Activated CD4-positive, alpha-beta memory T cell treated with anti-CD3 and anti-CD28 coated beads for 36 hours (primary cell): ENCODE measurements at regions of chr22 and their contacts with region 1.

Region 1: DNA sequence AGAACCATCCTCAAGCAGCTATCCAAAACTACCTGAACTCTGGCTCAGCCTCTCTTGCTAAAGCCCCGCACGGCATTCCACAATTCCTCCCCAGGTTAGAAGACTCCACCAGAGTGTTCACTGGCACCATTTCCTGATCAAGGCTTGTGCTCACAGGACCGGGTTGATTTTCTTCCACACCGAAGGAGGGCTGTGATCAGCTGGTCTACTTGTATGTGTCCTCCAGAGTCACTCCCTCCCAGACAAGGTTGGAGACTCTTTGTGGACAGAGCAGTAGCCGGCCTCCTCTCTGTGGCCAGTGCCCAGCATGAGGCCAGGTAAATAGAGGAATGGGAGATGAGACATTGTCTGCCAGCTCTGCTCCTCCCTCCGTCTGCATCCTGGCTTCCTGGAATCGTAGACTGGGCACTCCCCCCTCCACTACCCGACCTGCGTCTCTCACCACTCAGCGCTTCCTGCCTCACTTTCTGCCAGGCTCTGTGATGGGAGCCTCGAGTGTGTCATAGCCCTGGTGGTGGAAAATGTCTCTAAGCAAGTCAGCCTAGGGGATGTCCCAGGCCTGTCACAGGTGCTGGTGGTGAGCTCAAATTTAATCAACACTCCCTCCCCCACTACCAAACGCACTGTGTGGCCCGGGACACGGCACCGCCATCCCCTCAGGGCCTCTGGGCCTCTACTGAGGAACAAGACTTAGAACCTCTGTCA is 12.5 kb upstream of the TMPRSS6 start:
- DNase-seq: peak; percentile 97
- H3K4me3 Mint-ChIP-seq: peak overlapping the region; percentile 88
- H3K27ac Mint-ChIP-seq: peak overlapping the region; percentile 100
- H3K4me1 Mint-ChIP-seq: peaks cover 81% of the 10 kb centered on the region
- H3K27me3 Mint-ChIP-seq: no peaks in the 10 kb centered on the region

Region 2: GRCh38 chr22:36775964-36776669 is 345.9 kb before region 1 on chr22 and contains the start of gene IFT27:
- CTCF ChIA-PET with region 1: no interaction called
- POLR2A ChIA-PET with region 1: interaction called, 3 read pairs
- intact Hi-C with region 1: loop called (anchors 5 kb)
- DNase-seq: peak; percentile 99
- H3K4me3 Mint-ChIP-seq: peak within 1 kb of the TSS; percentile 84
- H3K27ac Mint-ChIP-seq: peak within 1 kb of the TSS; percentile 90
- H3K4me1 Mint-ChIP-seq: peaks cover 30% of the 10 kb centered on the region
- H3K27me3 Mint-ChIP-seq: no peaks in the 10 kb centered on the region
- total RNA-seq, gene IFT27: 27.9 to 32.1 TPM

Region 3: GRCh38 chr22:37060801-37061610 is 61.0 kb before region 1 on chr22:
- CTCF ChIA-PET with region 1: no interaction called
- POLR2A ChIA-PET with region 1: interaction called, 7 read pairs
- intact Hi-C with region 1: loop called (anchors 2 kb)
- DNase-seq: peak; percentile 91
- H3K4me3 Mint-ChIP-seq: peak overlapping the region; percentile 77
- H3K27ac Mint-ChIP-seq: peak overlapping the region; percentile 83
- H3K4me1 Mint-ChIP-seq: peaks cover 38% of the 10 kb centered on the region
- H3K27me3 Mint-ChIP-seq: no peaks in the 10 kb centered on the region

Region 4: DNA sequence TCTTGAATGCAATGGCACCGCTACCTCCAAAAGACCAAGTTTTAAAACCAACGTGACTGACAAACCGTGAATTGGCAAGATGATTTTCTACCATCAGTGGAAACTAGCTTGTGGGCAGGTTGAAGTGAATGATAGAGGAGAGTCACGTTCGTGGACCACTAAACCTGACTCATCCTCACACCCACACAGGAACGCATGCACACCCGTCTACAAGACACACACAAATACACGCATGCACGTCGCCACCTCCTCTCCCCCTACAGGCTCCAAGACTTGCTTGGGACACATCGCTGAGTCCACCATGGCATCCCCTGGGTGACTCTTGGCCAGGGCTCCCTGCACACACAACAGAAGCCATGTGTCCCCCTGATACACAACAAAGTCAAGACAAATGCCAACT is 26.9 kb before region 1 on chr22:
- CTCF ChIA-PET with region 1: interaction called, 4 read pairs
- POLR2A ChIA-PET with region 1: interaction called, 36 read pairs
- intact Hi-C with region 1: loop called (anchors 2 kb)
- DNase-seq: peak; percentile 85
- H3K4me3 Mint-ChIP-seq: no peak overlapping the region
- H3K27ac Mint-ChIP-seq: peak overlapping the region; percentile 76
- H3K4me1 Mint-ChIP-seq: peaks cover 35% of the 10 kb centered on the region
- H3K27me3 Mint-ChIP-seq: peaks cover 3% of the 10 kb centered on the region

Region 5: GRCh38 chr22:37166675-37167066 is 44.6 kb after region 1 on chr22:
- CTCF ChIA-PET with region 1: interaction called, 26 read pairs
- POLR2A ChIA-PET with region 1: interaction called, 70 read pairs
- intact Hi-C with region 1: loop called (anchors 1 kb)
- DNase-seq: peak; percentile 92
- H3K4me3 Mint-ChIP-seq: peak overlapping the region; percentile 68
- H3K27ac Mint-ChIP-seq: peak overlapping the region; percentile 67
- H3K4me1 Mint-ChIP-seq: peaks cover 79% of the 10 kb centered on the region
- H3K27me3 Mint-ChIP-seq: no peaks in the 10 kb centered on the region

Region 6: GRCh38 chr22:37244114-37244921 is 122.3 kb after region 1 on chr22 and contains the start of gene RAC2:
- CTCF ChIA-PET with region 1: no interaction called
- POLR2A ChIA-PET with region 1: interaction called, 17 read pairs
- intact Hi-C with region 1: no loop called
- DNase-seq: peak; percentile 96
- H3K4me3 Mint-ChIP-seq: peak within 1 kb of the TSS; percentile 99
- H3K27ac Mint-ChIP-seq: peak within 1 kb of the TSS; percentile 99
- H3K4me1 Mint-ChIP-seq: peaks cover 42% of the 10 kb centered on the region
- H3K27me3 Mint-ChIP-seq: no peaks in the 10 kb centered on the region
- total RNA-seq, gene RAC2: 714 to 727 TPM